SK-N-SH (cell line): ENCODE measurements at regions of chr9 and their contacts with region 1.

Region 1: DNA sequence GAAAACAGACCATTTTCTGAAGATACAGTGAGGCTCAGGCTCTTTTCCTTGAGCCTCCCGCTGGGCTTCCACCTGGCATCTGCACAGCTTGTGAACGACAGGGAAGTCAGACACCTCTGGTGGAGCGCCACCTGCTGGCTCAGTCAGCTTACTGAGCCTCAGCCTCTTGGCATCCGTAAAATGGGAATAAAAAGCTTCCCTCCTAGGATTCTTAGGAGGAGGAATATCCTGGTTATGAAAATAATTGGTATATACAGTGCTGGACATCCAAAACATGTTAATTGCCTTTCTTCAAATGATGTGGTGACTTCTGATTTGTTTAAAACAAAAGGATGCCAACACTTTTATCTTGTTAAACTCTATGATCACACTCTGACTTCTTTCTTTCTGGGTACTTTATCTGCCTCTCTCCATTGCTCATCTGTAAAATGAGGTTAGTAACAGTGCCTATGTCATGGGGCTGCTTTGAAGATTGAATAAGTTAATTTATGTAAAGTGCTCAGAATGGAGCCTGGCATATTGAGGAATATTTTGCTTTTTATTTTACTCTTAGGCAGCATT is 67.5 kb downstream of the MAMDC2 start:
- DNase-seq: peak; percentile 39
- H3K4me3 ChIP-seq: no peak overlapping the region
- H3K27ac ChIP-seq: no peak overlapping the region; a peak in 1 of 4 replicates
- H3K4me1 ChIP-seq: peaks cover 0 to 5% of the 10 kb centered on the region in 2 experiments; a peak in 2 of 4 replicates
- H3K27me3 ChIP-seq: no peaks in the 10 kb centered on the region
- CTCF ChIP-seq: peak; percentile 91
- EP300 ChIP-seq: no peak
- RAD21 ChIP-seq: peak; percentile 79

Region 2: GRCh38 chr9:69971643-69972449 is 139.3 kb before region 1 on chr9:
- CTCF ChIA-PET with region 1: interaction called, 433 read pairs
- POLR2A ChIA-PET with region 1: interaction called, 3 read pairs
- DNase-seq: peak; percentile 69
- H3K4me3 ChIP-seq: peak overlapping the region in 1 of 2 experiments; percentile 53; a peak in 1 of 4 replicates
- H3K27ac ChIP-seq: peak overlapping the region in 1 of 2 experiments; percentile 53; a peak in 2 of 4 replicates
- H3K4me1 ChIP-seq: peaks cover 0 to 16% of the 10 kb centered on the region in 2 experiments; a peak in 3 of 4 replicates
- H3K27me3 ChIP-seq: no peaks in the 10 kb centered on the region
- CTCF ChIP-seq: peak; percentile 97
- EP300 ChIP-seq: no peak
- RAD21 ChIP-seq: peak; percentile 92

Region 3: GRCh38 chr9:69993110-69993509 is 118.0 kb before region 1 on chr9:
- CTCF ChIA-PET with region 1: interaction called, 12 read pairs
- POLR2A ChIA-PET with region 1: no interaction called
- DNase-seq: no peak
- H3K4me3 ChIP-seq: no peak overlapping the region
- H3K27ac ChIP-seq: no peak overlapping the region
- H3K4me1 ChIP-seq: no peaks in the 10 kb centered on the region
- H3K27me3 ChIP-seq: no peaks in the 10 kb centered on the region
- CTCF ChIP-seq: no peak
- EP300 ChIP-seq: no peak
- RAD21 ChIP-seq: no peak

Region 4: DNA sequence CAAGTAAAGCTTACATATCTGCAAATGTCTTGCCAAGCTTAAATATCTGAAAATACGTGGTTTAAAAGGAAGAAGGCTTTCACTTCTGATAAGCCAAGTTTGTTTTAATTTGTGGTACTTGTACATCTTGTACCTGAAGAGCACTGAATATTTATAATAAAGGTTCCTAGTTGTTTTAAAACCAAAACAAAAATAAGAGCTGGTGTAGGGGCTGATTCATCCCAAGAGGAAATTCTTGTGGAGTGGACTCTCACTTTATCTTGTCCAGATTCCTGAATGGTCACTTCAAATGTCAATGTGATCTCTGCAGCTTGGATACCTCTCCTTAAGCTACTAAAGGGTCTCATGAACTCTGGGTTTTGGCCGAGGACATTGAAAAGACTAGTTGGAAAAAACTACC is 37.9 kb before region 1 on chr9:
- CTCF ChIA-PET with region 1: interaction called, 22 read pairs
- POLR2A ChIA-PET with region 1: no interaction called
- DNase-seq: no peak
- H3K4me3 ChIP-seq: no peak overlapping the region
- H3K27ac ChIP-seq: no peak overlapping the region
- H3K4me1 ChIP-seq: no peaks in the 10 kb centered on the region
- H3K27me3 ChIP-seq: no peaks in the 10 kb centered on the region
- CTCF ChIP-seq: no peak
- EP300 ChIP-seq: no peak
- RAD21 ChIP-seq: no peak

Region 5: GRCh38 chr9:70133253-70134208 is 22.4 kb after region 1 on chr9:
- CTCF ChIA-PET with region 1: interaction called, 11 read pairs
- POLR2A ChIA-PET with region 1: no interaction called
- DNase-seq: peak; percentile 14
- H3K4me3 ChIP-seq: no peak overlapping the region
- H3K27ac ChIP-seq: peak overlapping the region in 1 of 2 experiments; percentile 68; a peak in 2 of 4 replicates
- H3K4me1 ChIP-seq: peaks cover 16 to 32% of the 10 kb centered on the region in 2 experiments
- H3K27me3 ChIP-seq: no peaks in the 10 kb centered on the region
- CTCF ChIP-seq: no peak
- EP300 ChIP-seq: peak in 1 of 2 experiments; percentile 62; a peak in 2 of 4 replicates
- RAD21 ChIP-seq: no peak

Region 6: DNA sequence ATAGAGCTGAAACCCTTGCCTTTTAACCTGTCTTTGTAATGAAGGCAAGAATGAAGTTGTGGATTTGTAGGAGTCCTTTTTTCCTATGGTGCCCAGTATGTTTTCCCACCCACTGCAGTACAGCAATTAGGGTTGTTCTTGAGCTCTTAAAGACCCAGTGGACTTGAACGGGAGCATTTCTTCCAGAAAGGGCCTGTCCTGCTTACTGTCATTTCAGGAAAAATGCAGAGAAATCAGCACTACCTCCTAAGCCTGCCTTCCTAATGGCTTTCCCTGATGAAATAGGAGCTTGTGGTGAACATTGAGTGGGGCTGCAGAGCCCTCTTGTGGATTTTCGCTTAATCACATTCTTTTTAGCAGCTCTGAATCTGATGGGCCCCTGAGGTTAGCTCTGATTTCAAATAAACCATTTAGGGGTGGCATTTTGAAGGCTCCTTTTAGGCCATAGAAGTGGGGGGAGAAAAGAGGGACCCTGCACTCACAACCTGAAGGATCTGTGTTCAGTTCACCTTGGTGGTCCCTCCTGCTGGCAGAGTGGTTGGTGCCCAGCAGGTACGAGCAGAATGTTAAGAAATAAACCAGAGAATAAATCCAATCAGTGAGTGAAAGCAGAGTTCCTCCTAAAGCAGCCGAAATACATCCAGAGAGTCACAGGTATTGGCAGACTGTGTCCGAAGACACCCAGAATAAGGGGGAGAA is 491.3 kb after region 1 on chr9:
- CTCF ChIA-PET with region 1: interaction called, 12 read pairs
- POLR2A ChIA-PET with region 1: no interaction called
- DNase-seq: peak; percentile 66
- H3K4me3 ChIP-seq: peak overlapping the region in 1 of 2 experiments; percentile 14; a peak in 1 of 4 replicates
- H3K27ac ChIP-seq: peak overlapping the region; percentile 48 to 90
- H3K4me1 ChIP-seq: peaks cover 15 to 19% of the 10 kb centered on the region in 2 experiments
- H3K27me3 ChIP-seq: no peaks in the 10 kb centered on the region
- CTCF ChIP-seq: peak; percentile 85
- EP300 ChIP-seq: no peak
- RAD21 ChIP-seq: peak; percentile 98